IMR-90 (cell line): ENCODE measurements at regions of chr11 and their contacts with region 1.

Region 1: GRCh38 chr11:33172996-33173395 is 11.7 kb upstream of the CSTF3 start:
- DNase-seq: peak; percentile 31
- ATAC-seq: peak; percentile 69
- H3K4me3 ChIP-seq: no peak overlapping the region
- H3K27ac ChIP-seq: no peak overlapping the region; the same call in 1 of the 2 replicates
- H3K4me1 ChIP-seq: peaks cover 8% of the 10 kb centered on the region
- H3K27me3 ChIP-seq: no peaks in the 10 kb centered on the region
- CTCF ChIP-seq: no peak
- POLR2A ChIP-seq: no peak
- RAD21 ChIP-seq: no peak

Region 2: DNA sequence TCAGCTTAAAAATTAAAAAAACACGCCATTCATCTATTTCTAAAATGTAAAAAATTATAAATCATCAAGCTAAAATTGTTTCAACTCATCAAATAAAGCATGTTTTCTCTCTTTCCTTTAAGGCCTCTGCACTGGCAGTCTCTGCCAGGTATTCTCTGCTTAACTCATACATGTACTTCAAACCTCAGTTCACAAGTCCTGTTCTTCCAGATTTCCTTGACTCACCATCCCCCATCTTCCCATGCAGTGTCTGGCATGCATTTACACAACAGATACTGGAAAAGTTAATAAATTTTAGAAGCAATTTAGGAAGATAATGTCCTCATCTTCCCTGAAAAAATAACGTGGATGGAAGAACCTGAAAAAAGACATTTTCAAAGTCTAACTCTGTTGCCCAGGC is 44.3 kb before region 1 on chr11:
- CTCF ChIA-PET with region 1: no interaction called
- POLR2A ChIA-PET with region 1: no interaction called
- dilution Hi-C with region 1: no loop called
- in situ Hi-C with region 1: no loop called
- intact Hi-C with region 1: no loop called
- DNase-seq: no peak
- ATAC-seq: no peak
- H3K4me3 ChIP-seq: no peak overlapping the region
- H3K27ac ChIP-seq: no peak overlapping the region
- H3K4me1 ChIP-seq: no peaks in the 10 kb centered on the region
- H3K27me3 ChIP-seq: no peaks in the 10 kb centered on the region
- CTCF ChIP-seq: no peak
- POLR2A ChIP-seq: no peak
- RAD21 ChIP-seq: no peak

Region 3: GRCh38 chr11:33187998-33188722 is 15.2 kb after region 1 on chr11:
- CTCF ChIA-PET with region 1: interaction called, 3 read pairs
- POLR2A ChIA-PET with region 1: no interaction called
- dilution Hi-C with region 1: no loop called
- in situ Hi-C with region 1: no loop called
- intact Hi-C with region 1: loop called (anchors 2 kb)
- DNase-seq: no peak
- ATAC-seq: no peak
- H3K4me3 ChIP-seq: no peak overlapping the region
- H3K27ac ChIP-seq: no peak overlapping the region
- H3K4me1 ChIP-seq: peaks cover 16% of the 10 kb centered on the region
- H3K27me3 ChIP-seq: no peaks in the 10 kb centered on the region
- CTCF ChIP-seq: no peak
- POLR2A ChIP-seq: no peak
- RAD21 ChIP-seq: no peak

Region 4: GRCh38 chr11:33329705-33330329 is 156.8 kb after region 1 on chr11:
- CTCF ChIA-PET with region 1: interaction called, 3 read pairs
- POLR2A ChIA-PET with region 1: no interaction called
- dilution Hi-C with region 1: no loop called
- in situ Hi-C with region 1: loop called (anchors 5 kb)
- intact Hi-C with region 1: no loop called
- DNase-seq: peak; percentile 72
- ATAC-seq: peak; percentile 68
- H3K4me3 ChIP-seq: no peak overlapping the region
- H3K27ac ChIP-seq: no peak overlapping the region
- H3K4me1 ChIP-seq: no peaks in the 10 kb centered on the region; the same call in 1 of the 2 replicates
- H3K27me3 ChIP-seq: no peaks in the 10 kb centered on the region
- CTCF ChIP-seq: peak; percentile 73
- POLR2A ChIP-seq: no peak
- RAD21 ChIP-seq: peak; percentile 85